CD4-positive, alpha-beta memory T cell (primary cell): ENCODE measurements at regions of chr2 and their contacts with region 1.

Region 1: GRCh38 chr2:16745466-16745865 is 79.8 kb upstream of the CYRIA start:
- DNase-seq: no peak
- H3K4me3 ChIP-seq: no peak overlapping the region
- H3K4me3 Mint-ChIP-seq: no peak overlapping the region
- H3K27ac ChIP-seq: no peak overlapping the region
- H3K27ac Mint-ChIP-seq: no peak overlapping the region
- H3K4me1 ChIP-seq: no peaks in the 10 kb centered on the region
- H3K4me1 Mint-ChIP-seq: no peaks in the 10 kb centered on the region
- H3K27me3 ChIP-seq: no peaks in the 10 kb centered on the region
- H3K27me3 Mint-ChIP-seq: peaks cover 3 to 4% of the 10 kb centered on the region in 2 donors

Region 2: GRCh38 chr2:16756831-16757644 is 11.6 kb after region 1 on chr2:
- CTCF ChIA-PET with region 1: interaction called, 17 read pairs
- POLR2A ChIA-PET with region 1: no interaction called
- intact Hi-C with region 1: no loop called
- DNase-seq: peak in 4 of 5 donors; percentile 24 to 36 (median 28)
- H3K4me3 ChIP-seq: no peak overlapping the region
- H3K4me3 Mint-ChIP-seq: no peak overlapping the region
- H3K27ac ChIP-seq: no peak overlapping the region
- H3K27ac Mint-ChIP-seq: no peak overlapping the region
- H3K4me1 ChIP-seq: no peaks in the 10 kb centered on the region
- H3K4me1 Mint-ChIP-seq: no peaks in the 10 kb centered on the region
- H3K27me3 ChIP-seq: no peaks in the 10 kb centered on the region
- H3K27me3 Mint-ChIP-seq: peaks cover 0 to 4% of the 10 kb centered on the region in 2 donors

Region 3: GRCh38 chr2:16948053-16948452 is 202.6 kb after region 1 on chr2:
- CTCF ChIA-PET with region 1: no interaction called
- POLR2A ChIA-PET with region 1: no interaction called
- intact Hi-C with region 1: no loop called
- DNase-seq: no peak
- H3K4me3 ChIP-seq: no peak overlapping the region
- H3K4me3 Mint-ChIP-seq: peak overlapping the region in 1 of 8 donors; percentile 64
- H3K27ac ChIP-seq: no peak overlapping the region
- H3K27ac Mint-ChIP-seq: peak overlapping the region in 1 of 7 donors; percentile 22
- H3K4me1 ChIP-seq: no peaks in the 10 kb centered on the region
- H3K4me1 Mint-ChIP-seq: no peaks in the 10 kb centered on the region
- H3K27me3 ChIP-seq: no peaks in the 10 kb centered on the region
- H3K27me3 Mint-ChIP-seq: no peaks in the 10 kb centered on the region